Transverse colon (tissue), 4 donors: ENCODE measurements at regions of chr11 and their contacts with region 1.

Region 1: DNA sequence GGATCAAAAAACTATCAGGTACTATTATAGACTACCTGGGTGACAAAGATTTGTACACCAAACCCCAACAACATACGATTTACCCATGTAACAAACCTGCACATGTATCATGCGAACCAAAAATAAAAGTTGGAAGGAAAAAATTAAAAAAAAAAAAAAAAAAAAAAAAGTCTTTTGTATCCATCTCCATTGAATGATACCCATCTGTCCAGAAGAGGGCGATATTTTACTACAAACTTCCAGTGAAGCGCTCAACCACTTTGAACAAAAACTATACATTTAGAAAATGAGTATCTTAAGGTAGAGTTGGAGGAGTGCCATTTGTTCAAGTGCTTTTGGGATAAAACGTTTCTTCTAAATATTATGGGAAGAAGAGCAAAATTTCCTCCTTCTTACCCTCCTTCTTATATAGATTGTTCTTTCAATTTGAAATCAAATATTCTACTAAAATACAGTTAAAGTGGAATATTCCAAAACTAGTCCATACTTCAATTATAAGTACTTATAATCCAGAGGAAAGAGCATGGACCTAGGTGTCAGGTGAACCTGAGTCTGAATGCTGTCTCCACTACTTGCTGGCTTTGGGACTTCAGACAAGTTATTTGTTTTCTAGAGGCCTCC is 23.3 kb downstream of the ARL14EP start:
- DNase-seq: no peak
- H3K4me3 ChIP-seq: no peak overlapping the region
- H3K27ac ChIP-seq: no peak overlapping the region
- H3K4me1 ChIP-seq: no peaks in the 10 kb centered on the region
- H3K27me3 ChIP-seq: no peaks in the 10 kb centered on the region
- CTCF ChIP-seq: peak; percentile 59 to 76 (median 65)
- EP300 ChIP-seq: no peak
- POLR2A ChIP-seq: no peak

Region 2: GRCh38 chr11:30545507-30545906 is 199.3 kb after region 1 on chr11:
- in situ Hi-C with region 1: no loop called
- intact Hi-C with region 1: no loop called
- DNase-seq: peak; percentile 20
- H3K4me3 ChIP-seq: no peak overlapping the region
- H3K27ac ChIP-seq: no peak overlapping the region
- H3K4me1 ChIP-seq: no peaks in the 10 kb centered on the region
- H3K27me3 ChIP-seq: no peaks in the 10 kb centered on the region
- CTCF ChIP-seq: no peak
- EP300 ChIP-seq: no peak
- POLR2A ChIP-seq: no peak

Region 3: DNA sequence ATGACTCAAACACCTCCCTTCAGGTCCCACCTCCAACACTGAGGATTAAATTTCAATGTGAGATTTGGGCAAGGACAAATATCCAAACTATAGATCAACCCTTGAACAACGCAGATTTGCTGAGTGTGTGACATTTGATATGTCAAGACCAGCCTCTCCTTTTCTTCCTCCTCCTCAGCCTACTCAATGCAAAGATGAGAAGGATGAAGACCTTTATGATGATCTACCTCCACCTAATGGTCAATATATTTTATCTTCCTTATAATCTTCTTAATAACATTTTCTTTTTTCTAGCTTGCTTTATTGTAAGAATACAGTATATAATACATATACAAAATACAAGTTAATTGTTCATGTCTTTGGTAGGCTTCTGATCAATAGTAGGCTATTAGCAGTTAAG is 307.4 kb after region 1 on chr11:
- in situ Hi-C with region 1: no loop called
- intact Hi-C with region 1: loop called (anchors 2 kb)
- DNase-seq: no peak
- H3K4me3 ChIP-seq: no peak overlapping the region
- H3K27ac ChIP-seq: no peak overlapping the region
- H3K4me1 ChIP-seq: no peaks in the 10 kb centered on the region
- H3K27me3 ChIP-seq: no peaks in the 10 kb centered on the region
- CTCF ChIP-seq: peak in 1 of 5 experiments; percentile 7
- EP300 ChIP-seq: no peak
- POLR2A ChIP-seq: no peak

Region 4: GRCh38 chr11:30917859-30918478 is 571.8 kb after region 1 on chr11:
- in situ Hi-C with region 1: loop called in 2 of 4 experiments (anchors 10 to 25 kb)
- intact Hi-C with region 1: no loop called
- DNase-seq: no peak
- H3K4me3 ChIP-seq: no peak overlapping the region
- H3K27ac ChIP-seq: no peak overlapping the region
- H3K4me1 ChIP-seq: no peaks in the 10 kb centered on the region
- H3K27me3 ChIP-seq: no peaks in the 10 kb centered on the region
- CTCF ChIP-seq: peak; percentile 50 to 71 (median 57)
- EP300 ChIP-seq: no peak
- POLR2A ChIP-seq: no peak